PC-9 (cell line): ENCODE measurements at regions of chrX and their contacts with region 1.

Region 1: GRCh38 chrX:73562984-73563737 is at the start of gene CHIC1:
- DNase-seq: peak; percentile 55 to 59
- H3K4me3 ChIP-seq: peak within 1 kb of the TSS; percentile 71
- H3K27ac ChIP-seq: peak within 1 kb of the TSS; percentile 28; the same call in 1 of the 2 replicates
- H3K4me1 ChIP-seq: 0 out of 2 replicates have a peak, but pooled peaks cover 4% of the 10 kb centered on the region
- H3K27me3 ChIP-seq: no peaks in the 10 kb centered on the region
- CTCF ChIP-seq: no peak
- total RNA-seq, gene CHIC1: 7.8 and 8.6 TPM in 2 replicates

Region 2: DNA sequence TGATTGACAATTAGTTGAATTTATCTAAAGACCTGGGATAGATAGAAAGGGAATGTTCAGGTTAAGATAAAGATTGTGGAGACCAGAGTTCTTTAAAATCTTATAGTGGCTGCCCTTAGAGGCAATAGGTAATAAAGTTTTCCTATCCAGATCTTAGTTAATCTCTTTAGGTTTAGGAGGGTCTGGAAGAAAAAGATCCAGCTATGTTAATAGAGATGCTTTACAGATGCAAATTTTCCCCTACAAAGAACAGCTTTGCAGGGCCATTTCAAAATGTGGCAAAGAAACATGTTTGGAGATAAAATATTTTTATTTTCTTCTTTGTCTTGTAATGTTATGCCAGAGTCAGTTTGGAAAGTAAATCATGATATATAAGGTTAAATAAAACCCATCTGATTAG is 54.3 kb before region 1 on chrX:
- CTCF ChIA-PET with region 1: no interaction called
- POLR2A ChIA-PET with region 1: no interaction called
- intact Hi-C with region 1: loop called (anchors 2 kb)
- DNase-seq: no peak
- H3K4me3 ChIP-seq: no peak overlapping the region
- H3K27ac ChIP-seq: no peak overlapping the region
- H3K4me1 ChIP-seq: no peaks in the 10 kb centered on the region
- H3K27me3 ChIP-seq: no peaks in the 10 kb centered on the region
- CTCF ChIP-seq: no peak

Region 3: DNA sequence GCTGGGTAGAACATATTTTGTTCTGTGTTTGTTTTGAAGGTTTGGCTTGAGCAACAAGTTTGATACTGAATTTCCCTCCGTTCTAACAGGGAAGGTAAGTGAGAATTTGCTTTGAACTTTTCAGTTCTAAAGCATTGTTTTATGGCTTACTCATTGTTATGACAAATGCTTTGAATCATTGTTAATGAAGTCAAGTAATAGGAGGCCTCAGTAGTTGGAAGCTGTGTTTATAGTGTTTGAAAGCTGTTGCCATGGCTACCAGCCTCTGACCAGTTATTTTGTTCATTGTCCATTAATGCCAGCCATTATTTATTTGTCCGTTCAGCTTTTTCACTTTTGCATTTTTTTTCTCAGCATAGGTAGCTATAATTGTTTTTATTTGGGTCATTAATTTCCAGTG is 14.2 kb after region 1 on chrX:
- CTCF ChIA-PET with region 1: no interaction called
- POLR2A ChIA-PET with region 1: interaction called, 3 read pairs
- intact Hi-C with region 1: loop called (anchors 2 kb)
- DNase-seq: peak; percentile 28 to 78
- H3K4me3 ChIP-seq: no peak overlapping the region
- H3K27ac ChIP-seq: no peak overlapping the region
- H3K4me1 ChIP-seq: no peaks in the 10 kb centered on the region
- H3K27me3 ChIP-seq: no peaks in the 10 kb centered on the region
- CTCF ChIP-seq: no peak

Region 4: GRCh38 chrX:73963682-73964081 is 400.5 kb after region 1 on chrX:
- CTCF ChIA-PET with region 1: no interaction called
- POLR2A ChIA-PET with region 1: no interaction called
- intact Hi-C with region 1: no loop called
- DNase-seq: no peak
- H3K4me3 ChIP-seq: no peak overlapping the region
- H3K27ac ChIP-seq: no peak overlapping the region
- H3K4me1 ChIP-seq: no peaks in the 10 kb centered on the region
- H3K27me3 ChIP-seq: no peaks in the 10 kb centered on the region
- CTCF ChIP-seq: no peak